Activated T-helper 1 cell treated with anti-CD3 and anti-CD28 coated beads, Interleukin-12 subunit alpha, Interleukin-12 subunit beta, Interleukin-2, Interleukin-4 antibody, amounts not matched to agents 30 ng/mL and 10 ng/mL and 1 ng/mL, durations not matched to agents 14 hours and 24 hours and 36 hours (primary cell): ENCODE measurements at regions of chr12 and their contacts with region 1.

Region 1: DNA sequence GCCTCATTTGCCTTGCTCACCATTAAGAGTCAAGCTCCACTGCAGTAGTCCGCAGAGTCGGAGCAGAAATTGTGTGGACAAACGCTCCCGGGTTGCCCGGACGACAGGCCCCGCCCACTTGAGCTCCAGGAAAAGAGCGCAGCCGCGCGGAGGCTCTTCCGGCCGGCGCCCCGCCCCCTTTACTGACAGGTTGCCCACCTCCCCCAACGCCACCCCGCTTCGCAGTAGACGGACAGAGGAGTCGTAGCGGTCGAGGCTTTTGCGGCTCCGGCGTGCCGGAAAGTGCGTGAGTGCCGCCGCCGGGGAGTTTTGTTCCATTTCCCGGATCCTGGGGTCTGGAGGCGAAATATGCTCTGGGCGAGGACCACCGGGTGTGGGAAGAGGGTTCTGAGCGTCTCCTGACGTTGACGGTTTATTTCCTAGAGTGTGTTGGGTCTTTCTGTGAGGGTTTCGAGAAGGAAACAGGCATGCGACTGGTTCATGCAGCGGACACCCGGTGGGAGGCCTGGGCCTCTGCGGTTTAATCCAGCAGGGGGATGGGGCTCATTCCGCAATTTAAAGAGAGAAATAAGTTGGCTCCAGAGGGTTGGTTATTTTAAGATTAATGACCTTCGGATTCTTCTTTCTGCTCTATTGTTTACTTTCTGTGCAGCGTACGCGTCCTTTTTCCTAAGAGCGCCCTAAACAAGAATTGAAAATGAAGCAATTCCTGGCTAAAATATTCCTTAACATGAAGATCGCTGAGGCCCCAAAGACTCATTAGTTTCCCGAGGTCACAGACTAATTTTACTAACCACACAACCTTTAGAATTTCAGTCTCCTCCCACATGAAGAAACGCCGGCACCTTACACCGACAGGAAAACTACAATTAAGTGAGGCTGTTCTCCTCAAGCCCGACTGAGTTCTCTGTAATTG is at the starts of genes DNAI7 and ETFRF1:
- DNase-seq: peak; percentile 92
- H3K4me3 Mint-ChIP-seq: peak within 1 kb of the TSS; percentile 98
- H3K27ac Mint-ChIP-seq: peak within 1 kb of the TSS; percentile 95
- H3K4me1 Mint-ChIP-seq: peaks cover 23% of the 10 kb centered on the region
- H3K27me3 Mint-ChIP-seq: peaks cover 2% of the 10 kb centered on the region
- total RNA-seq, gene DNAI7: 0.23 TPM in 1 of 2 replicates, not detected in the other
- total RNA-seq, gene ETFRF1: 9.7 and 10.4 TPM in 2 replicates

Region 2: DNA sequence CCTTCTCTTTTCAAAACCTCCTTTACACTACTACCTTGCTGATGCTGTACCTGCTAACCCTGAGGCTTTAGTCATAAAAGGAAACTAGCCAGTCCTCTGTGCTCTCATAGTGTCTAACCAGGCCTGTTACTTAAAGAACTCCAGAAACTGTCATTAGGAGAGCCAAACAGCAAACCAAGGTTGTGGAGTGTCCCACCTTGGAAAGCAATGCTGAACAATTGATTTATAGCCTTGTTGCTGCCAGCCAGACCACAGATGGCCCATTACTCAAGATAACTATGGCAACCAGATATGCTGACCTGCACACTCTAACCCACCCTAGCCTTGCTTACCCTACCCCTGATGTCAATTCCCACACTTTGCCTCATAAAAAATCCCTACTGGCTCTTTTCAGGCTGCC is 219.9 kb before region 1 on chr12:
- intact Hi-C with region 1: no loop called
- DNase-seq: no peak
- H3K4me3 Mint-ChIP-seq: no peak overlapping the region
- H3K27ac Mint-ChIP-seq: no peak overlapping the region
- H3K4me1 Mint-ChIP-seq: no peaks in the 10 kb centered on the region
- H3K27me3 Mint-ChIP-seq: peaks cover 8% of the 10 kb centered on the region

Region 3: GRCh38 chr12:25151476-25151875 is 43.8 kb before region 1 on chr12:
- intact Hi-C with region 1: loop called (anchors 2 kb)
- DNase-seq: no peak
- H3K4me3 Mint-ChIP-seq: no peak overlapping the region
- H3K27ac Mint-ChIP-seq: no peak overlapping the region
- H3K4me1 Mint-ChIP-seq: peaks cover 7% of the 10 kb centered on the region
- H3K27me3 Mint-ChIP-seq: no peaks in the 10 kb centered on the region

Region 4: DNA sequence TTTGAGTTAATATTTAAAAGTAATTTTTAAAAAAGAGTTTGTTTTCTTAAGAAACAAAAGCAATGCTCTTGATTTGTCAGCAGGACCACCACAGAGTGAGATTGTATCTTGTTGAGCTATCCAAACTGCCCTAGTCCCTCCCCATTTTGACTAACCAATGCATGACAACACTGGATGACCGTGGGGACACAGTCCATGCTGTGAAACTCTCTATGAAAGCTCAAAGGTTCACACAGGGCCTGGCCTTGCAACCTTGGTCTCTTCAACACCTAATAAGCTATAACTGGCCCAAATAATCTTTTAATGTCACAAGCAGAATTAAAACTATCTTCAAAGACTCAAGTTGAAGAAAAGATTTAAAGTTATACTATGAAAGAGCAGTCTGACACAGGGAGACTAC is 13.2 kb after region 1 on chr12:
- intact Hi-C with region 1: loop called (anchors 2 kb)
- DNase-seq: no peak
- H3K4me3 Mint-ChIP-seq: no peak overlapping the region
- H3K27ac Mint-ChIP-seq: peak overlapping the region; percentile 29
- H3K4me1 Mint-ChIP-seq: no peaks in the 10 kb centered on the region
- H3K27me3 Mint-ChIP-seq: no peaks in the 10 kb centered on the region